ENCODE measurements at regions of chrX and their contacts with region 1.

Region 1: DNA sequence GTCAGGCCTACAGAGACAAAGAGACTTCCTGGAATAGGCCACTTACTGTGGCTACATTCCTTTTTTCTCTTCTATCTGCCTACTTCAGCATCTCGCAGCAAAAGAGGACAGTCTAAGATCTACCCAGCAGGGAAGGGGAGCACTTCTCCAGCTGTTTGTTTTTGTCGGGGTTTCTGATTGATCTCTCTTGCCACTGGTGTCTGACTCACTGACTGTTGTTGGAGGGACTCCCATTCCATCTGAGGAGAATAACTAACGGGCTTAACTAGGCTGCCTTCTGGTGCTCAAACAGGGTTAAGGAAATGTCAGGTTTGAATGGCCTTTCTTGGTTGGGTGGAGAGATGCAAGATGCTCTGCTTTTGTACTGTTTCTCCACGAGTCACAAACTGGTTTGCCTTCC is 100.2 kb upstream of the TMEM164 start:
- DNase-seq: peak in 1 of 7 donors; percentile 16
- H3K4me3 ChIP-seq: no peak overlapping the region
- H3K27ac ChIP-seq: no peak overlapping the region
- H3K4me1 ChIP-seq: no peaks in the 10 kb centered on the region
- H3K27me3 ChIP-seq: peaks cover 14% of the 10 kb centered on the region
- CTCF ChIP-seq: no peak
- POLR2A ChIP-seq: no peak

Region 2: DNA sequence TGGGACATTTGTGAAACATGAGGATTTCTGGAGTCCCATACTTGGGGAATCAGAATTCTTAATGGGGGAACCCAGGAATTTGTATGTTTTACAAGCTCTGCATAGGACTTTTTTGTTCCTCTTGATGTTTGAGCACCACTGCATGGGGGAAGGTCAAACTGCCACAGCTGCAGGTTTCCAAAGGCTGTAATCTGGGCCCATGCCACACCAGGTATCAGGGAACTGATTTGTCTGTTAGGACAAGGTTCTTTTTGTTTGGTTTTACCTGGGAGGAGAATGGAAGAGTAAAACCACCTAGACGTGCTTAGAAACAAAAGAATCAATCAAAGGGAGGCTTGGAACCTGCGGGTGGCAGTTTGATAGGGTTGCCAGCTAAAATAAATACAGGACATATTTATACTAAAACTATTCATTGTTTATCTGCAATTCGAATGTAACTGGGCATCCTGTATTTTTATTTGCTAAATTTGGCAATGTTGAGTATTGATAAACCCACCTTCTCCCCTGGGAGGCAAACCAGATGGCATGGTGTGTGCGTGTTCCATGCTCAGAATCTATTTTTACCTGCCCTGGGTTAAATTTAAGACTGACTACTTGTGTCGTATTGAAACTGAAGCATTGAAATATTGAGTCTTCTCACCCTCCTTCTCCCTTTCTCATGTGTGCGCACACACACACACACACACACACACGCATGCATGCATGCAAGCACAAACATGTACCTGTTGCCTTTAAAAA is 164.0 kb after region 1 on chrX:
- intact Hi-C with region 1: no loop called
- DNase-seq: no peak
- H3K4me3 ChIP-seq: no peak overlapping the region
- H3K27ac ChIP-seq: no peak overlapping the region
- H3K4me1 ChIP-seq: peaks cover 0 to 6% of the 10 kb centered on the region in 2 donors
- H3K27me3 ChIP-seq: peaks cover 10% of the 10 kb centered on the region
- CTCF ChIP-seq: no peak
- POLR2A ChIP-seq: no peak

Region 3: DNA sequence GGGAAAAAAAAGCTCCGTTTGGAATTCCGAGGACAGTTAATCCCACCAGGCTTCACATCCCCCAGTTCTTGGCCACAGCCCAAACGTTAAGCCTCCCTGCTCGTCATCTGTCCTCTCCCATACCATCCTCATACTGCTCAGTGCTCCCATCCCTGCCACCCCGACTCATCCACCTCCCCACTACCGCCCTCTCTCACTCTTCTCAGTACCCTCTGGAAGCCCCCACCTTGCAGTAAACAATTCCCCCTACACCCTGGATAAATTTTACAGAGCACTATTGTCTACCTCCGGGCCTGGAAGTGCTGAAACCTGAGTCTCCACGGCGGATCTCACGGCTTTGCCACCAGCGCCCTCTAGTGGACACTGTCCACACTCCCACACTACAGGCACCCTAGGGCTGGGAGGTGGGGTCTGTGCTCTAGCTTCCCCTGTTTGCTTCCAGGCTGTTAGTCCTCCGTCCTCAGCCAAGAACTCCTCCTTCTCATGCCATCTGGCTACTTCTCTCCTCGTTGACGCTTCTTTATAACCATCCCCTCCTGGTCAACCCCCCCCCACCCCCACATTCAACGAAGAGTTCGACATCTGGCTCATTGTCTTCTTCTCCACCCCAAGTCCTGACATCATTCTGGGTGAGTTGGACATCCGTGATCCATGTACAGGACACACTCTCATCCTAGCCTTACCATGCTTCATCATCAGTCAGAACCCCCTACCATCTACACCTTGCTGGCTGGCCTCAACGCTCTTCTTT is 510.5 kb after region 1 on chrX:
- intact Hi-C with region 1: loop called in 1 of 2 experiments (anchors 10 kb)
- DNase-seq: peak; percentile 50 to 82 (median 67)
- H3K4me3 ChIP-seq: no peak overlapping the region
- H3K27ac ChIP-seq: no peak overlapping the region
- H3K4me1 ChIP-seq: no peaks in the 10 kb centered on the region
- H3K27me3 ChIP-seq: peaks cover 15% of the 10 kb centered on the region
- CTCF ChIP-seq: peak; percentile 56 to 88 (median 78)
- POLR2A ChIP-seq: no peak